ENCODE measurements at regions of chr9 and their contacts with region 1.

Region 1: GRCh38 chr9:100028201-100028784 is 70.5 kb downstream of the ERP44 start:
- DNase-seq: peak; percentile 73
- H3K4me3 ChIP-seq: no peak overlapping the region
- H3K27ac ChIP-seq: no peak overlapping the region
- H3K4me1 ChIP-seq: peaks cover 0 to 9% (median 0%) of the 10 kb centered on the region in 4 donors
- H3K27me3 ChIP-seq: no peaks in the 10 kb centered on the region
- CTCF ChIP-seq: peak; percentile 69 to 91 (median 87)
- EP300 ChIP-seq: no peak
- POLR2A ChIP-seq: no peak

Region 2: GRCh38 chr9:100216178-100216787 is 188.0 kb after region 1 on chr9:
- in situ Hi-C with region 1: loop called (anchors 10 to 25 kb)
- intact Hi-C with region 1: no loop called
- DNase-seq: peak; percentile 61
- H3K4me3 ChIP-seq: no peak overlapping the region
- H3K27ac ChIP-seq: no peak overlapping the region
- H3K4me1 ChIP-seq: no peaks in the 10 kb centered on the region
- H3K27me3 ChIP-seq: no peaks in the 10 kb centered on the region
- CTCF ChIP-seq: peak; percentile 45 to 66 (median 55)
- EP300 ChIP-seq: no peak
- POLR2A ChIP-seq: no peak

Region 3: DNA sequence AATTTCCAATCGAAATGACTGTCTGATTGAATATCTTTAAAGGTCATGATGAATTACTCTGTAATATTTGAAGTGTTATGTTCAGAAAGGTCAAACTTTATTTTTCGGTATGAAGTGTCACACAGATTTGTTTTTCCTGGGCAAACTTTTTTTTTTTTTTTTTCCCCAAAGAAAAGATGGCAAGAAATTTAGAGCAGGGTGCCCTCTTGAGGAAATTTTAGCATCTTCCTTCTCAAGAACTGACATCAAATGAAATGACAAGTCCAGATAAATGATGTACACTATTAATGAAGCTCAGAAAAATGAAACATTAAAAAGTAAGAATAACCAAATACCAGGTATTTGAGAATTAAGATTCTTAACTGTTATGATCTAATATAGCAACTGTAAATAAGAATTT is 194.4 kb after region 1 on chr9:
- in situ Hi-C with region 1: loop called (anchors 10 to 25 kb)
- intact Hi-C with region 1: no loop called
- DNase-seq: no peak
- H3K4me3 ChIP-seq: no peak overlapping the region
- H3K27ac ChIP-seq: no peak overlapping the region
- H3K4me1 ChIP-seq: no peaks in the 10 kb centered on the region
- H3K27me3 ChIP-seq: no peaks in the 10 kb centered on the region
- CTCF ChIP-seq: peak in 1 of 5 experiments; percentile 11
- EP300 ChIP-seq: no peak
- POLR2A ChIP-seq: no peak

Region 4: GRCh38 chr9:100324594-100325200 is 296.4 kb after region 1 on chr9:
- in situ Hi-C with region 1: loop called in 1 of 4 experiments (anchors 25 kb)
- intact Hi-C with region 1: no loop called
- DNase-seq: no peak
- H3K4me3 ChIP-seq: no peak overlapping the region
- H3K27ac ChIP-seq: no peak overlapping the region
- H3K4me1 ChIP-seq: peaks cover 0 to 6% (median 0%) of the 10 kb centered on the region in 4 donors
- H3K27me3 ChIP-seq: no peaks in the 10 kb centered on the region
- CTCF ChIP-seq: peak; percentile 27 to 54 (median 44)
- EP300 ChIP-seq: no peak
- POLR2A ChIP-seq: no peak

Region 5: GRCh38 chr9:100492952-100493351 is 464.7 kb after region 1 on chr9:
- in situ Hi-C with region 1: no loop called
- intact Hi-C with region 1: no loop called
- DNase-seq: no peak
- H3K4me3 ChIP-seq: no peak overlapping the region
- H3K27ac ChIP-seq: no peak overlapping the region
- H3K4me1 ChIP-seq: no peaks in the 10 kb centered on the region
- H3K27me3 ChIP-seq: no peaks in the 10 kb centered on the region
- CTCF ChIP-seq: no peak
- EP300 ChIP-seq: no peak
- POLR2A ChIP-seq: no peak